ENCODE measurements at regions of chr12 and their contacts with region 1.

Region 1: GRCh38 chr12:64157110-64157509 is 65.0 kb downstream of the KICS2 start:
- DNase-seq: no peak

Region 2: GRCh38 chr12:64124511-64125197 is 32.5 kb before region 1 on chr12:
- intact Hi-C with region 1: loop called in 1 of 2 experiments (anchors 1 kb)
- DNase-seq: no peak

Region 3: DNA sequence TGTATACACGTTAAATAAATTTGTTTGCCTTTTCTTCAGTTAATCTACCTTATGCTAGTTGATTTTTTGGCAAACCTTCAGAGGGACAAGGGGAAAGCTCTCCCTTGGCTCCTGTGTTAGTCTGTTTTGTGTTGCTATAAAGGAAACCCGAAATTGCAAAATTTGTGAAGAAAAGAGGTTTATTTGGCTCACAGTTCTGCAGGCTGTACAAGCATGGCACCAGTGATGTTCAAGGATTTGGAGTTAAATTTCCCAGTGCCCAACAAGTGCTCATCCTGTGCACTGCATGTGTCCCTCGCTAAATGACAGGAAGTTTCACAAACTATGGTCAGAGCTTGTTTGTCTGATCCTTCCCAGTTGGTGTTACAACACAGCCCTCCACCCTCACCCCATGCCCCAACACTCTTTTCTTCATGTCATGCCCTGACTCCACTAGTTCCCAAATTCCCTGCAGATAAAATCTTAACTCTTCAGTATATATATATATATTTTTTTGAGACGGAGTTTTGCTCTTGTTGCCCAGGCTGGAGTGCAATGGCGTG is 439.2 kb after region 1 on chr12:
- intact Hi-C with region 1: no loop called
- DNase-seq: no peak

Measured in posterior vena cava (tissue), 2 donors.